Activated T-helper 2 cell treated with anti-CD3 and anti-CD28 coated beads, Interferon-gamma antibody, Interleukin-2, Interleukin-4, amounts not matched to agents 10 μg/mL and 5 μg/mL and 100 μg/mL, durations not matched to agents 14 hours and 24 hours and 36 hours (primary cell): ENCODE measurements at regions of chr16 and their contacts with region 1.

Region 1: DNA sequence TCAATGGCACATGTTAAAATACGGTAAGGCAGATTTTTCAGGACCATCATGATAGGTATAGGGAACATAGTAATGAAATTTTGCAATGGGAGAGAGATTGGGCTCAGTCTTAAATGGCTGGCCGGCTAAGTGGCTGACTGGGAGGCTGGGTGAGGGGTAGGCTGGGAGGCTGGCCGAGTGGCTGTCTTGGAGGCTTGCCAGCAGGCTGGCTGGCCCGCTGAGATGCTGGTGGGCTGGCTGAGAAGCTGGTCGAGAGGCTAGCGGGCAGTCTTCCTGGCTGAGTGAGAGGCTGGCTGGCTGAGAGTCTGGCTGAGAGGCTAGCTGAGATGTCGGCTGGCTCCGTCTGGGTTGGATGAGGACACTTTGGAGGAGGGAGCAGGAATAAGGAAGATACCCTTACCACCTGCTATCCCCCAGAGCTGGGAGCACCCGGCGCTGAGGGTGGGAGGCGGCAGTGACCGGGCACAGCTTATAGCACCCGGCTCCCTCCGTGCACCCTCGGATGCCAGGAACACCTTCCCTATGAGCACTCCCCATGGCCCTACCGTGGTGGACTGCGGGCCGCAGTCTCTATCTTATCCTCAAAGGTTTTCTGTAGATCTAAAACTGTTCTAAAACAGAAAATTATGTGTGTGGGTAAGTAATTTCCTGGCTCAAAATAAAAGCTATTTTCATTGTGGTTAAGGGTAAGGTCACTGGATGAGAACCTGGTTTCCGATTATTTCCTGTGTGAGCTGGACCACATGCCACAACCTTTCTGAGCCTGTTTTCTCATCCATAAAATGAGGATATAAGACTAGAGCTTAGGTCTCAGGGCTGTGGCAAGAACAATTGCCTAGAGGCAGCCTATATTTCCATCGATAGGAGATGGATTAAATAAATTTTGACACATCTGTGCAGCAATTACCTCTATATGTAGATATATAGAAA is 34.5 kb upstream of the TMC5 start:
- DNase-seq: peak; percentile 16
- H3K4me3 Mint-ChIP-seq: peak overlapping the region; percentile 32
- H3K27ac Mint-ChIP-seq: no peak overlapping the region
- H3K4me1 Mint-ChIP-seq: peaks cover 53% of the 10 kb centered on the region
- H3K27me3 Mint-ChIP-seq: peaks cover 26% of the 10 kb centered on the region

Region 2: GRCh38 chr16:19490619-19491018 is 107.5 kb after region 1 on chr16:
- intact Hi-C with region 1: loop called (anchors 5 kb)
- DNase-seq: no peak
- H3K4me3 Mint-ChIP-seq: no peak overlapping the region
- H3K27ac Mint-ChIP-seq: no peak overlapping the region
- H3K4me1 Mint-ChIP-seq: peaks cover 13% of the 10 kb centered on the region
- H3K27me3 Mint-ChIP-seq: no peaks in the 10 kb centered on the region

Region 3: DNA sequence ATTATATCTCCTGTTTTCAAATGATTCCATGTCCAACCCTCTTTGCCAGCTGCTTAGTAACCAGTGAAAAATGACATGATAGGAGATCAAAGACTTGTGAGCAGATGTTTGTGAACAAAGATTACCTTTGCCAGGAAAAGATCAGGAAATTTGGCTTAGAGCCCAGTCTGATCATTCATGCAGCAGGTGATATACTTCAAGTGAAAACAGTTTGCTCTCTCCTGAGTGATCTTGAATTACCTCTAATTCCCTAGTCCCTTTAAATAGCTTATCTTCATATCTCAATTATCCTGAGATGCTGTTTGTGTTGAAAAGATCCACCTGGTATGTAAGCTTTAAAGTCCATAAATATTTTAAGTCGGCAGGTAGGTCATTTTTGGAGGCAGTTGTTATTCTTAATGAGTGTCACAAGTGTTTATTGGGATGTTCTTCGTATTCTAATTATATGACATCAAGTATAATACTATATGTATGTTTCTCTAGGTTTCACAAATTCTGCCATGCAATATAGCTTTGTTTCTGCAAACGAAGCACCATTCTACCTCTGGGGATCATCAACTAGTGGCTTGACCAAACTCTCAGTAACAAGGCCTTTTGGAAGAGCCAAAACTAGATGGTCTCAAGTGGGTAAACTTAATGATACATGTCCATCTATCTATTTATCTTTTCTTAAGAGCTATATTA is 159.1 kb after region 1 on chr16:
- intact Hi-C with region 1: no loop called
- DNase-seq: no peak
- H3K4me3 Mint-ChIP-seq: no peak overlapping the region
- H3K27ac Mint-ChIP-seq: peak overlapping the region; percentile 58
- H3K4me1 Mint-ChIP-seq: peaks cover 13% of the 10 kb centered on the region
- H3K27me3 Mint-ChIP-seq: no peaks in the 10 kb centered on the region